ENCODE measurements at regions of chr3 and their contacts with region 1.

Region 1: GRCh38 chr3:187679638-187680396 is 9.6 kb upstream of the SST start:
- DNase-seq: peak in 34 of 35 experiments; percentile 6 to 75 (median 48)
- ATAC-seq: peak; percentile 42 to 57 (median 53)
- H3K4me3 ChIP-seq: no peak overlapping the region
- H3K4me3 Mint-ChIP-seq: no peak overlapping the region
- H3K27ac ChIP-seq: no peak overlapping the region
- H3K27ac Mint-ChIP-seq: no peak overlapping the region
- H3K4me1 ChIP-seq: no peaks in the 10 kb centered on the region
- H3K4me1 Mint-ChIP-seq: peaks cover 0 to 2% (median 0%) of the 10 kb centered on the region in 3 donors
- H3K27me3 ChIP-seq: peaks cover 0 to 12% of the 10 kb centered on the region in 2 experiments
- H3K27me3 Mint-ChIP-seq: peaks cover 41 to 44% of the 10 kb centered on the region in 2 donors

Region 2: GRCh38 chr3:187223799-187224198 is 456.0 kb before region 1 on chr3:
- CTCF ChIA-PET with region 1: interaction called, 8 to 11 read pairs
- POLR2A ChIA-PET with region 1: no interaction called
- DNase-seq: no peak
- ATAC-seq: no peak
- H3K4me3 ChIP-seq: no peak overlapping the region
- H3K4me3 Mint-ChIP-seq: no peak overlapping the region
- H3K27ac ChIP-seq: no peak overlapping the region
- H3K27ac Mint-ChIP-seq: no peak overlapping the region
- H3K4me1 ChIP-seq: no peaks in the 10 kb centered on the region
- H3K4me1 Mint-ChIP-seq: no peaks in the 10 kb centered on the region
- H3K27me3 ChIP-seq: peaks cover 0 to 30% of the 10 kb centered on the region in 2 experiments
- H3K27me3 Mint-ChIP-seq: peaks cover 4 to 8% of the 10 kb centered on the region in 2 donors

Region 3: DNA sequence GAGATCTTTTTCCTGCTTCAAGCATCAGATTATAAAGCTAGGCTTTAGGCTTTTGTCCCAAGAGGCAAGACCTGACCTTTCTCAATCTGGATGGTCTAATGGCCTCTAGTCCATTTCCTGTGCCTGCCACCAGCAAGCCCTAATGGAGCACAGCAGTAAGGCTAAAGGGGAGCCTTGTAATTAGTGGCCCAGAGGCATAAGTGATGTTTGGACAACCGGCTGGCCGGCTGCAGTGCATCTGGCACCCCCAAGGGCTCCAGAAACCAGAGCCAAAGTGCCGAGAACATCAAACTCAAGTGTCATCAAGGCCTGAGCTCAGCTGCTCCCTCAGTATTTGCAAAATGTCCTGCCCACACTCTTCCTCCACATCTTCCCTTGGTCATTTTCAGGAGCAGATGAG is 343.5 kb before region 1 on chr3:
- CTCF ChIA-PET with region 1: interaction called, 5 to 10 read pairs
- POLR2A ChIA-PET with region 1: no interaction called
- DNase-seq: no peak
- ATAC-seq: no peak
- H3K4me3 ChIP-seq: no peak overlapping the region
- H3K4me3 Mint-ChIP-seq: no peak overlapping the region
- H3K27ac ChIP-seq: no peak overlapping the region
- H3K27ac Mint-ChIP-seq: no peak overlapping the region
- H3K4me1 ChIP-seq: no peaks in the 10 kb centered on the region
- H3K4me1 Mint-ChIP-seq: no peaks in the 10 kb centered on the region
- H3K27me3 ChIP-seq: peaks cover 0 to 9% of the 10 kb centered on the region in 2 experiments
- H3K27me3 Mint-ChIP-seq: peaks cover 22 to 34% of the 10 kb centered on the region in 2 donors

Region 4: DNA sequence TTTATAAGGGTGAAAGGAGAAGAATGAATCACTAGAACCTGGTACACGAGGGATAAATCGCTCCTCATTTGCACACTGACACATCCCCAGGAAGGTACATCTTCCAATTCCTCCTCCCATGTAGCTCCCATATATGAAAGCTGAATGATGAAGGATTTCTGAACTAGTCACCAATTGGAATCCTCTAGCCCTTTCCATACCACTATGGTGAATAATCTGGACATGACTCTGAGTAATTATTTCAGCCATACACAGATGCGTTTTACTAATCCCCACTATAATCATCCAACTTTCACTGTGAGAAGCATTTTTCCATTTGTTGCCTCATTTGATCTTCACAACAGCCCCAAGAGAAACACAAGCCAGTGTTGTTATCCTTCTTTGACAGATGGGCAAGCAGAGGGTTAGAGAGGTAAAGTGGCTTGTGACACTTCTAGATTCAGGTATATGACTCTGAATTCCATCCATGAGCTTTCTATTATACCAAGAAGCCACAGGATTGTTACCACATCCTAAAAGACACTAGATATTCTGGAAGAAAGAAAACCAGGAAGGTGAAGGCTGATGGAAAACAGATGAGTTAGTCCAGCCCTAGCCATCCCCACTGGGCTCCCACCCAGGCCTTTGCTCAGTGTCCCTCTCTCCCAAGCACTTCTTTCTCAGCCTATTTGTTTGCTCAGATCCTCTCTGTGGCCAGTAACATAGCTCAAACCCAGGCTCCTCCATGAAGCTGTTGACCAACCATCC is 87.6 kb after region 1 on chr3:
- CTCF ChIA-PET with region 1: no interaction called
- POLR2A ChIA-PET with region 1: no interaction called
- DNase-seq: no peak
- ATAC-seq: no peak
- H3K4me3 ChIP-seq: no peak overlapping the region
- H3K4me3 Mint-ChIP-seq: no peak overlapping the region
- H3K27ac ChIP-seq: no peak overlapping the region
- H3K27ac Mint-ChIP-seq: no peak overlapping the region
- H3K4me1 ChIP-seq: peaks cover 0 to 5% of the 10 kb centered on the region in 2 experiments
- H3K4me1 Mint-ChIP-seq: peaks cover 18 to 24% (median 23%) of the 10 kb centered on the region in 3 donors
- H3K27me3 ChIP-seq: no peaks in the 10 kb centered on the region
- H3K27me3 Mint-ChIP-seq: peaks cover 0 to 2% of the 10 kb centered on the region in 2 donors

Region 5: DNA sequence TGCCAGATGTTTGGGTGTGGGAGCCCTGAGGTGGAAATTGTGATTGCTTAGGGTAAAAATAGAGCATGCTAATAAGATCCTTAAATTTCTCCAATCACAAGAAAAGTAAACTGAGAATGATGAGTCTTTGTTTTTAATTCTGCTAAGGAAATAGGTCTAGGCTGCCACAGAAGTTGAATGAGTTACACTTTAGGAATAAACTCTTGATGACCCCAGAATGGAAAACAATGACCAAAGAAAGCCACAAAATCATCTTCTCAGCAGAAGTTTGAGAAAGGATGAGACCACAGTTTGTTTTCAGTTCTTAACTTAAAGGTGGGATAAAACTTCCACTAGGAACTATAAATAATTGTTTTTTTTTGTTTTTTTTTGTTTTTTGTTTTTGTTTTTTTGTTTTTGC is 230.0 kb after region 1 on chr3:
- CTCF ChIA-PET with region 1: no interaction called
- POLR2A ChIA-PET with region 1: no interaction called
- DNase-seq: no peak
- ATAC-seq: no peak
- H3K4me3 ChIP-seq: no peak overlapping the region
- H3K4me3 Mint-ChIP-seq: no peak overlapping the region
- H3K27ac ChIP-seq: no peak overlapping the region
- H3K27ac Mint-ChIP-seq: no peak overlapping the region
- H3K4me1 ChIP-seq: no peaks in the 10 kb centered on the region
- H3K4me1 Mint-ChIP-seq: peaks cover 3 to 8% (median 6%) of the 10 kb centered on the region in 3 donors
- H3K27me3 ChIP-seq: no peaks in the 10 kb centered on the region
- H3K27me3 Mint-ChIP-seq: no peaks in the 10 kb centered on the region

Region 6: GRCh38 chr3:188061133-188061532 is 381.3 kb after region 1 on chr3:
- CTCF ChIA-PET with region 1: no interaction called
- POLR2A ChIA-PET with region 1: no interaction called
- DNase-seq: peak in 29 of 35 experiments; percentile 7 to 61 (median 23)
- ATAC-seq: peak; percentile 43 to 86 (median 81)
- H3K4me3 ChIP-seq: no peak overlapping the region
- H3K4me3 Mint-ChIP-seq: no peak overlapping the region
- H3K27ac ChIP-seq: no peak overlapping the region
- H3K27ac Mint-ChIP-seq: peak overlapping the region; percentile 22 to 41
- H3K4me1 ChIP-seq: peaks cover 0 to 7% of the 10 kb centered on the region in 2 experiments
- H3K4me1 Mint-ChIP-seq: peaks cover 8 to 20% (median 18%) of the 10 kb centered on the region in 3 donors
- H3K27me3 ChIP-seq: no peaks in the 10 kb centered on the region
- H3K27me3 Mint-ChIP-seq: no peaks in the 10 kb centered on the region

Region 7: GRCh38 chr3:188244395-188244861 is 564.6 kb after region 1 on chr3:
- CTCF ChIA-PET with region 1: no interaction called
- POLR2A ChIA-PET with region 1: no interaction called
- DNase-seq: no peak
- ATAC-seq: no peak
- H3K4me3 ChIP-seq: no peak overlapping the region
- H3K4me3 Mint-ChIP-seq: no peak overlapping the region
- H3K27ac ChIP-seq: no peak overlapping the region
- H3K27ac Mint-ChIP-seq: no peak overlapping the region
- H3K4me1 ChIP-seq: no peaks in the 10 kb centered on the region
- H3K4me1 Mint-ChIP-seq: peaks cover 0 to 22% (median 0%) of the 10 kb centered on the region in 3 donors
- H3K27me3 ChIP-seq: no peaks in the 10 kb centered on the region
- H3K27me3 Mint-ChIP-seq: no peaks in the 10 kb centered on the region